ENCODE measurements at regions of chr19 and their contacts with region 1.

Region 1: DNA sequence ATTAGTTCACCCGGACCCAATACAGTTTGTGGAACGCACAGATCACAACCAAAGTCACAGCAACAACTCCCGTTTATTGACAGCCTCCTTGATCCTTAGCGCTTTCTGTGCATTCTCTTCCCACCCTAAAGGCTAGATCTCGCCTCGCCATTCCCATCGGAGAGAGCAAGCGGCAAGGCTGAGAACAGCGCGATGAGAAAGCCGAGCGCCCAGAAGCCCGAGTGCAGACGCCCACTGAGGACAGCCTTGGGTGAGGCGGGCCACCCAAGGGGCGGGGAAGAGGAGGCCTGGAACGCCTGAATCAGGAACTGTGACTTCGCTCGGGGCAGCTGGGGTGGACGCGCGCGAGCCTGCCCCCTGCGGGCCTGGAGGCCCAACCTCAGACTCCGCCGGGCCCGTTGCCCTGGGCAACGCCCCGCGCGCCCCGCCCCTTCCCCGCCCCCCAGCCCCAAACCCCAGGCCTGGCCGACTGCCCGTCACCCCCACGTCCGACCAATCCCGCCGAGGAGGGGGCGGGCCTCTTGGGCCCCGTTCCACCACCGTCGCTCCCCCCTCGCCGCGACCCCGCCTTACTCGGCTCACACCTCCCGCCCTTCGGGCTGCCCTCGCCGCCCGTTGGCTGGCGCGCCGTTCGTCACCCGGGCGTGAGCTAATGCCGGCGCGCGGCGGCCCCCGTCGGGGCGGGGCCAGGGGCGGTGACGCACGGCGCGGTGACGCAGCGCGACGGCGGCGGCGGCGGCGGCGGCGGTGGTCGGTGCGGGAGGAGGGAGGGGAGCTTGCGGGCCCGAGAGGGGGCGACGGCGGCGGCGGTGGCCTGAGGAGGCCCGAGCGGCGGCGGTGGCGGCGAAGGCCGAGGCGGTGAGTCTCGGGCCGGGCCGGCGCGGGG is at the start of gene SAMD4B:
- DNase-seq: peak; percentile 98 to 99
- H3K4me3 ChIP-seq: peak within 1 kb of the TSS; percentile 70 to 94 (median 89)
- H3K27ac ChIP-seq: peak within 1 kb of the TSS; percentile 93 to 97
- H3K4me1 ChIP-seq: peaks cover 0 to 29% of the 10 kb centered on the region in 2 donors
- H3K27me3 ChIP-seq: no peaks in the 10 kb centered on the region
- CTCF ChIP-seq: peak; percentile 52 to 76 (median 76)
- POLR2A ChIP-seq: peak; percentile 76
- total RNA-seq, gene SAMD4B: 57.4 to 65.2 (median 59.7) TPM

Region 2: DNA sequence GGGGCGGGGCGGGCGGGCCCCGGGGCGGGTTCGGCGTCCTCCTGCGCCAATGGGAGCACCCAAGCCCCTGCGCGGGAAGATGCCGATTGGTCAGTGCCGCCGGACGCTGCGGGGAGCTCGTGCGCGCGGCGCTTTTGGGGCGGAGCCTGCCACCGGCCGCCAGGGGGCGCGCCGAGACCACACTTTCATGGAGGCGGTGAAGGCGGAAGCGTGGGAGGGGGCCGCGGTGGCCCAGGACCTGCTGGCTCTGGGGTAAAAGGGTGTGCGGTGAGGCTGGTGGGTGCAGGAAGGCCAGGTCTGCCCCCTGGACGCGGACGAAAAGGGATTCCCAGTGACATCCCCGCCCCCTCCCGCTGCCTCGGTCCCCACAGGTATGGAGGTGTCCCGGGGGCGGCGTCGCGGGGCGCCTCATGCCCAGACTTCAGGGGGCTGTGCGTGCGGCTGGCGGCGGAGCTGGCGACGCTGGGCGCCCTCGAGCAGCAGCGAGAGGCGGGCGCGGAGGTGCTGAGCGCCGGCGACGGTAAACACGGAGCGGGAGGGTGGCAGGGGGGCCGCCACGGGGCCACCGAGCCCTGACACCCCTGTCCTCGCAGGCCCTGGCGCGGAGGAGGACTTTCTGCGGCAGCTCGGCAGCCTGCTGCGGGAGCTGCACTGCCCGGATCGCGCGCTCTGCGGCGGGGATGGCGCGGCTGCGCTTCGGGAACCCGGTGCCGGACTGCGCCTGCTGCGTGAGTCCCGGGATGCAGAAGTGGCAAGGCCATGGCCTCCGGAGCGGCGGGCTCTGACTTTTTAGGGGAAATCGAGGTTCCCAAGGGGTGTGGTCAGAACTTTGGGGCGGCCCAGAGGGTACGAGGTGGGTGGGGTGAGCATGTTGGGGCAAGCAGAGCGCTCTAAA is 938.7 kb before region 1 on chr19 and contains the start of gene FAM98C:
- intact Hi-C with region 1: loop called (anchors 10 kb)
- DNase-seq: peak; percentile 96 to 98
- H3K4me3 ChIP-seq: peak within 1 kb of the TSS; percentile 93 to 99 (median 94)
- H3K27ac ChIP-seq: peak within 1 kb of the TSS; percentile 88 to 93
- H3K4me1 ChIP-seq: no peaks in the 10 kb centered on the region
- H3K27me3 ChIP-seq: peaks cover 0 to 8% of the 10 kb centered on the region in 2 donors
- CTCF ChIP-seq: peak; percentile 98
- POLR2A ChIP-seq: peak; percentile 17
- total RNA-seq, gene FAM98C: 21.1 to 32.6 (median 22.9) TPM

Region 3: GRCh38 chr19:39362682-39363657 is 21.0 kb after region 1 on chr19:
- intact Hi-C with region 1: loop called (anchors 1 kb)
- DNase-seq: no peak
- H3K4me3 ChIP-seq: peak overlapping the region in 1 of 3 donors; percentile 1
- H3K27ac ChIP-seq: peak overlapping the region; percentile 63 to 95
- H3K4me1 ChIP-seq: no peaks in the 10 kb centered on the region
- H3K27me3 ChIP-seq: no peaks in the 10 kb centered on the region
- CTCF ChIP-seq: no peak
- POLR2A ChIP-seq: no peak

Measured in breast epithelium (tissue), 4 donors.